Activated CD4-positive, alpha-beta T cell treated with anti-CD3 and anti-CD28 coated beads for 36 hours (primary cell): ENCODE measurements at regions of chr9 and their contacts with region 1.

Region 1: DNA sequence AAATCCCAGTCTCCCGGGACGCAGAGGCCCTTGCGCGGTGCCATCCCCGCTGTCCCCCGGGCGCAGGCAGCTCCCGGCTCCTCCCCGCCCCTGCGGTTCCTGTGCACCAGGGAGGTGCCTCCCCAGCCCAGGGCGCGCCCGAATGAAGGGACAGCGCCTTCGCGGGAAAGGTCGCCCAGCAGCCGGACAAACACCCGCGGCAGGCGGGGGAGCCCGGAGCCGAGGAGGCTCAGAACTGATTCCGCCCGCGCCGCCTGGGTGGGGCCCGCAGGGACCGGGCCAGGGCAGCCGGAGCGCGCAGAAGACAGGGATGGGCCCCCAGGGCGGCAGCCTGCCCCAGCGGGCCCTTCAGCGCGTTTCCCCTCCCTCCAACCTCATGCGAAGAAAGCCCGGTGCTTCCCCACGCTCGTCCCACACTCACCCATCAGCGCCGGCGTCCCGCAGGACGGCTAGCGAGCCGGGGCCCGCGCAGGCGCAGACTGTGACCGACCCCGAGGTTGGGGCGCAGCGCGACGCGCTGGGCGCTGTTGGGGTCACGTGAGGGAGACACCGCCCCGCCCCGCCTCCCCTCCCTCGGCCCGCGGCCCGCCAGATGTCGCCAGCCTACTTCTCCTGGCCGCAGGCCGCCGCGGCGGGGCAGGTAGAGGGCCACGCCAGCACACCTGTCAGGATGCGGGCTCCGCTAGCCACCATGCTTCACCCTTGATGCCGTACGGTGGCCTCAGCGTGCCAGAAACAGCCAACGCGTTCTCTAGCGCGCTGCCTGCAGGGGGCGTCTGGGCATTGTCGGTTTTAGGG is at the start of gene SLC25A51:
- DNase-seq: peak; percentile 96
- ATAC-seq: peak; percentile 86
- H3K4me3 Mint-ChIP-seq: peak within 1 kb of the TSS; percentile 85
- H3K27ac Mint-ChIP-seq: peak within 1 kb of the TSS; percentile 89
- H3K4me1 Mint-ChIP-seq: peaks cover 11% of the 10 kb centered on the region
- H3K27me3 Mint-ChIP-seq: no peaks in the 10 kb centered on the region
- total RNA-seq, gene SLC25A51: 25.5 to 29.4 TPM

Region 2: DNA sequence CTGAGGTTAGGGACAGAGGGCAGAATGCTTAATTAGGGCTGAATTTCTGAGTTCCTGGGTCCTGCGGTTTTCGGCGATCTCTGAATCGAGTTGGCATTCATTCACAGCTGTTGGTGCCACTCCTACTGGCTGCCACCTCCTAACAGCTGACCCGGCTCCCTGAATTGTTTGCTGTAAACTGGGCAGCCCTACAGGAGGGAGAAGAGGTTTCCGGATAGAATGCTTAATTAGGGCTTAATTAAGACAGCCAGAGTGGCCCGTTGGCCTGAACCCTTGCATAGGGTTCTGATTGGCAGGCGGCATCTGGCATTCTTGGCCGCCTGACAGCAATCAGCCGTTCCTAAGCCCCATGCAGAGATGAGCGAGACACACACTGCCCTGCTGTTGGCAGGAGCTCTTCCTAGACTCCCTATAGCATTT is 227.4 kb before region 1 on chr9:
- CTCF ChIA-PET with region 1: no interaction called
- POLR2A ChIA-PET with region 1: no interaction called
- intact Hi-C with region 1: no loop called
- DNase-seq: no peak
- ATAC-seq: no peak
- H3K4me3 Mint-ChIP-seq: no peak overlapping the region
- H3K27ac Mint-ChIP-seq: no peak overlapping the region
- H3K4me1 Mint-ChIP-seq: no peaks in the 10 kb centered on the region
- H3K27me3 Mint-ChIP-seq: peaks cover 14% of the 10 kb centered on the region

Region 3: GRCh38 chr9:37753489-37754190 is 150.2 kb before region 1 on chr9 and contains the start of gene TRMT10B:
- CTCF ChIA-PET with region 1: no interaction called
- POLR2A ChIA-PET with region 1: no interaction called
- intact Hi-C with region 1: loop called (anchors 1 to 10 kb)
- DNase-seq: peak; percentile 88
- ATAC-seq: peak; percentile 94
- H3K4me3 Mint-ChIP-seq: peak within 1 kb of the TSS; percentile 91
- H3K27ac Mint-ChIP-seq: peak within 1 kb of the TSS; percentile 92
- H3K4me1 Mint-ChIP-seq: peaks cover 32% of the 10 kb centered on the region
- H3K27me3 Mint-ChIP-seq: no peaks in the 10 kb centered on the region
- total RNA-seq, gene TRMT10B: 12.3 to 15.6 TPM

Region 4: DNA sequence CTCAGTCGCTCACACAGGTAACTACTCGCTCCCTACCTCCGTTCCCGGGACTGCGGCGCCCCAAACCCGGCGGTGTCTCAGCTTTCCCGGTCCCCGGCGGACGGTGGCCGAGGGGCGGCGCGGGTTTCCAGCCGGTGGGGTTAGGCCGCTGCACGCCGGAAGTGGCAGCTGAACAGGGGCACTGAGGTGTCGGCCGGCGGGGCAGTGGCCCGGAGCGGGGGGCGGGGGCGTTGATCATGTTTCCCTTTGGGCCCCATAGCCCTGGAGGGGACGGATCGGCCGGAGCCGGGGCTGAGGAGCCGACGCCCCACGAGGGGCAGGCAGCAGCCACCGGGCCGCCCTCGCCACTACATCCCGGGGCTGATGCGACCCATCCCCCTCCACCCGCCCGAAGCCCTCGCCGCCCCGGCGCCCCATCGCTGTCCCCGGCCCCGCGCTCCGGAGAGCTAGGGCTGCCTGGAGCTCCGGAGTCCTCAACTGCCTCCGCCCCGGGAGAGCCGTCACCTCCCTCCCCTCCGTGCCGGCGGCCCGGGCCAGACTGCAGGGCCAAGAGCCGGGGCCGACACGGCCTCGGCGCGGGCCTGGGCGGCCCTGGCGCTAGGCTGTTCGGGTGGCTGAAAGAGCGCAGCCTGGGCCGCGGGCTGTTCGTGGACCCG is 103.1 kb before region 1 on chr9 and contains the start of gene DCAF10:
- CTCF ChIA-PET with region 1: no interaction called
- POLR2A ChIA-PET with region 1: no interaction called
- intact Hi-C with region 1: loop called (anchors 1 kb)
- DNase-seq: peak; percentile 92
- ATAC-seq: peak; percentile 78
- H3K4me3 Mint-ChIP-seq: peak within 1 kb of the TSS; percentile 90
- H3K27ac Mint-ChIP-seq: peak within 1 kb of the TSS; percentile 89
- H3K4me1 Mint-ChIP-seq: peaks cover 35% of the 10 kb centered on the region
- H3K27me3 Mint-ChIP-seq: no peaks in the 10 kb centered on the region
- total RNA-seq, gene DCAF10: 13.9 to 15.4 TPM

Region 5: GRCh38 chr9:37840560-37841194 is 63.2 kb before region 1 on chr9:
- CTCF ChIA-PET with region 1: no interaction called
- POLR2A ChIA-PET with region 1: no interaction called
- intact Hi-C with region 1: loop called in 1 of 2 experiments (anchors 2 kb)
- DNase-seq: peak; percentile 41
- ATAC-seq: peak; percentile 58
- H3K4me3 Mint-ChIP-seq: no peak overlapping the region
- H3K27ac Mint-ChIP-seq: no peak overlapping the region
- H3K4me1 Mint-ChIP-seq: peaks cover 11% of the 10 kb centered on the region
- H3K27me3 Mint-ChIP-seq: no peaks in the 10 kb centered on the region

Region 6: DNA sequence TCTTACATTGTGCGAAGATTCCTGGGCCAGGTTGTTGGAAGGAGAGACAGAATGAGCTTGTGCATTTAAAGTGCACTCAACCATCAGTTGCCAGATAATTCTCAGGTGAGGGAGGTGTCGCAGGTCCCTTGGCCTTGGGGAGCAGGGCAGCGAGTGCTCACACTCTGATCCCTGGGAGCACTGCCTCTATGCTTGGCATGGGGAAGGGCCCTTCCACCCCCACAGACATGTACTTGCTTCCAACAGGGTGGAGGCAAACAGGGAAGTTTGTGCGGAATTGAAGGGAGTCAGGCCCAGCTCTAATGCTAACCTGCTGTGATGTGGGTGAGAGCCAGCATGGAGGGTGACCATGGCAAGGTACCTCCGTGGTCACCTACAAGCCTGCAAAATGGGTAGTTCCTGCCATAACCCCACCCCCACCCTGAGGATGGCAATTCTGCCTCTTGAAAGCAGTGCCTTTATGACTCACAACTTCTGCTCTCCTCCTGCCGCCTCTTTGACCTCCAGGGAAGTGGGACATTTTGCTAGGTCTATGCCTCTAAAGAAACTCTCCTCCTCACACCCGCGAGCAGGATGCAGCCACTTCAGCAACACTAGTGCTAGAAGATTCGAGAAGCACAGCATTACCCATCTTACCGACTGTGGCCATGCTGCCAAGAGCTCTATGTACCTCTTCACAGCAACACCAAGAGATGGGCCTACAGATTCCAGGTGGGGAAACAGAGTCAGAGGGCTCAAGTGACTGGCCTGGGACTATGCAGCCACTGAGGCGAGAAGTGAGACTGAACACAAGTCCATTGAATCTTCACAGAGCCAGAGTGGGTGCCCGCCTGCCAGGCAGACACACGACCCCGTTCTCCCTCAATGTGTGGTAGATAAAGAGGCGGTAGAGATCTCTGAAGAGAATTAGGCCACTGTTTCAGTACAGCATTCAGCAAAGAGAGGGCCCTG is 22.2 kb after region 1 on chr9:
- CTCF ChIA-PET with region 1: no interaction called
- POLR2A ChIA-PET with region 1: no interaction called
- intact Hi-C with region 1: no loop called
- DNase-seq: peak; percentile 12
- ATAC-seq: peak; percentile 16
- H3K4me3 Mint-ChIP-seq: no peak overlapping the region
- H3K27ac Mint-ChIP-seq: no peak overlapping the region
- H3K4me1 Mint-ChIP-seq: peaks cover 2% of the 10 kb centered on the region
- H3K27me3 Mint-ChIP-seq: no peaks in the 10 kb centered on the region

Region 7: GRCh38 chr9:38392235-38393127 is 488.6 kb after region 1 on chr9 and contains the start of gene ALDH1B1:
- CTCF ChIA-PET with region 1: no interaction called
- POLR2A ChIA-PET with region 1: no interaction called
- intact Hi-C with region 1: loop called in 1 of 2 experiments (anchors 1 kb)
- DNase-seq: peak; percentile 81
- ATAC-seq: peak; percentile 99
- H3K4me3 Mint-ChIP-seq: peak within 1 kb of the TSS; percentile 91
- H3K27ac Mint-ChIP-seq: peak within 1 kb of the TSS; percentile 83
- H3K4me1 Mint-ChIP-seq: peaks cover 13% of the 10 kb centered on the region
- H3K27me3 Mint-ChIP-seq: peaks cover 6% of the 10 kb centered on the region
- total RNA-seq, gene ALDH1B1: 20.3 to 21.8 TPM